ENCODE measurements at regions of chr2 and their contacts with region 1.

Region 1: GRCh38 chr2:130342533-130343275 is at the start of gene IMP4:
- DNase-seq: peak; percentile 96
- ATAC-seq: peak; percentile 92
- H3K4me3 Mint-ChIP-seq: peak within 1 kb of the TSS; percentile 98
- H3K27ac Mint-ChIP-seq: peak within 1 kb of the TSS; percentile 100
- H3K4me1 Mint-ChIP-seq: peaks cover 28% of the 10 kb centered on the region
- H3K27me3 Mint-ChIP-seq: no peaks in the 10 kb centered on the region
- total RNA-seq, gene IMP4: 148 to 169 TPM

Region 2: DNA sequence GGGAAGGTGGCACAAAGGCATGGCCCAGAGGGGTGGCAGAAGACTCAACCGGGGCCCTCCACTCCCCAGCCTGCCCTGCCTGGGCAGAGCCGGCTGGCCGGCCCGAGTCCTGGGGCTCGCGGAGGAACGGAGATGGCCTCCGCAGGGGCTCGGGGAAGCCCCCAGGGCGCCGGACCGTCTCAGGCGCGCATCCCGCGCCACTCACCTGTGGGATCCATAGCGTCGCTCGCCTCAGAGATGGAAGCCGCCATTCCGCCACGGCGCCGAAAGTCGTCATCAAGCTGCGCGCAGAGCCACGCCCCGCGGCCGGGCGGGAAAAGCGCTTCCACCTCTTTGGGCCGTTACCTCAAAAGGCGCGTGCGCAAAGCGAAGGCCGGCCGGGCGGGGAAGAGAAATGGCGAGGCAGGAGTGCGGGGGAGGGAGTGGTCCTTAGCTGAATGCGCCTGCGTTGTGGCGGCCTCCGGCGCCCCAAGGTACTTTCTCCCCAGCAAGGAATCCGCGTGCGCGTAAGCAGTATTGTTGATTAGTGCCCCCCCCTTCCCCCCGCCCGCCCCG is 161.3 kb before region 1 on chr2 and contains the start of gene SMPD4:
- CTCF ChIA-PET with region 1: interaction called, 13 read pairs
- POLR2A ChIA-PET with region 1: interaction called, 7 read pairs
- intact Hi-C with region 1: loop called in 1 of 2 experiments (anchors 1 kb)
- DNase-seq: peak; percentile 98
- ATAC-seq: peak; percentile 74
- H3K4me3 Mint-ChIP-seq: peak within 1 kb of the TSS; percentile 95
- H3K27ac Mint-ChIP-seq: peak within 1 kb of the TSS; percentile 90
- H3K4me1 Mint-ChIP-seq: peaks cover 22% of the 10 kb centered on the region
- H3K27me3 Mint-ChIP-seq: no peaks in the 10 kb centered on the region
- total RNA-seq, gene SMPD4: 73.8 to 78.6 TPM

Region 3: DNA sequence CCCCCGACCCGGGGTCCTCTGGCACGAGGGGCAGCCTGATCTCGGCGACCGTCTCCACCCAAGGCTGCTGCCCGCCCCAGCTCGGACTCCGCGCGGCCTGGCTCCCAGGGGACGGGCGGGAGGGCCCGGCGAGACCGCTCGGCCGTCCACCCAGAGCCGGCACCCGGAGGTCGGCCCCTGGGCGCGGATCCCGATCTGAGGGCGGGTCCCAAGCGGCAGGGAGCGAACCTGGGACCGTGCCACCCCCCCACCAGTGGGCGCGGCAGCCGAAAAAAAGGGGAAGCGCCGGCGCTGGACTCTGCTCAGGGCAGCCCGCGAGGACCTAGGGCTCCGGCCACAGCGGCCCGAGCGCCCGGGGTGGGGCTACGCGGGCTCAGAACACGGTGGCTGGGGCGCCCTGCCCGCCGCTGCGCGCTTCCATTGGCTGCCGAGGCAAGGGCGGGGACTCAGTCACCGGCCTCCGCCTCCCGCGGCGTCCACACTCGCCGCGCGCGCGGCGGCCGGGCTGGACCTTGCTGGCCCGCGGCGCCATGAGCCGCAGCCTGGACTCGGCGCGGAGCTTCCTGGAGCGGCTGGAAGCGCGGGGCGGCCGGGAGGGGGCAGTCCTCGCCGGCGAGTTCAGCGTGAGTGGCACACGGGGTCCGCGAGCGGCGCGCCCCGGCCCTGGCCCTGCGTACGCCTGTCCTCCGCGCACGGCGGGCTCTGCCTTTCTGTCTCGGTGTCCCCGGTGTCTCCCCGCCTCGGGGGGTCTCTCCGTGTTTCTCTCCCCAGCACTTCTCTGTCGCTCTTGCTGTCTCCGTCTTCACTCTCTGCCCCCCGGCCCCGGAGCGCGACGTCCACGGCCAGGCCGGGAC is 13.1 kb after region 1 on chr2 and contains the start of gene PTPN18:
- CTCF ChIA-PET with region 1: interaction called, 5 read pairs
- POLR2A ChIA-PET with region 1: interaction called, 4 read pairs
- intact Hi-C with region 1: loop called (anchors 1 kb)
- DNase-seq: peak; percentile 76
- ATAC-seq: peak; percentile 96
- H3K4me3 Mint-ChIP-seq: peak within 1 kb of the TSS; percentile 67
- H3K27ac Mint-ChIP-seq: peak within 1 kb of the TSS; percentile 43
- H3K4me1 Mint-ChIP-seq: peaks cover 8% of the 10 kb centered on the region
- H3K27me3 Mint-ChIP-seq: no peaks in the 10 kb centered on the region
- total RNA-seq, gene PTPN18: 41.6 to 49.3 TPM

Region 4: GRCh38 chr2:130391058-130391871 is 48.6 kb after region 1 on chr2:
- CTCF ChIA-PET with region 1: interaction called, 3 read pairs
- POLR2A ChIA-PET with region 1: no interaction called
- intact Hi-C with region 1: loop called in 1 of 2 experiments (anchors 1 kb)
- DNase-seq: peak; percentile 91
- ATAC-seq: peak; percentile 99
- H3K4me3 Mint-ChIP-seq: peak overlapping the region; percentile 72
- H3K27ac Mint-ChIP-seq: peak overlapping the region; percentile 87
- H3K4me1 Mint-ChIP-seq: peaks cover 10% of the 10 kb centered on the region
- H3K27me3 Mint-ChIP-seq: peaks cover 6% of the 10 kb centered on the region

Region 5: DNA sequence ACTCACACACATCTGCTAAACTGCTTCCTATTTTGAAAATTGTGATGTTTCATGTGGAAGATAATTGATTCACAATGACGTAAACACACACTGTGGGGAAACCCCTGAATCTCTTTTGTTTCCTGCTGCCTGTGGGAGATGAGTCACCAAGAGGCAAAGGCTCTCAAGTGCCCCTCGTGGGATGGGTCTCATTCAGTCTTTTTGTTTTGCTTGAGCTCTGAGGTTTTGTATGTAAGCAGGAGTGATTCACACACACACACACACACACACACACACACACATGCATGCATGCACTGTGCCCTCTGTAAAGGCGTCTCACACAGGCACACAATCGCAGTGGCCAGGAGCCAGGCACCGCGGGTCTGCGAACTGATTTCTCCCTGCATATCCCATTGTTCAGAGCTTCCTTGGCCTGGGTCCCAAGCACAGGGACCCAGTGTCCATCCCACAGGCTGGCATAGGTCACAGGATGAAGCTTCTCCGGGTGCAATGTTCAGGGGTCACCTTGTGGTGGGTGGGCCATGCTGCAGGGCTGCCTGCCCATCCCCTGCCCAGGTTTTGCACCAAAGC is 481.9 kb after region 1 on chr2:
- CTCF ChIA-PET with region 1: no interaction called
- POLR2A ChIA-PET with region 1: no interaction called
- intact Hi-C with region 1: loop called in 1 of 2 experiments (anchors 10 kb)
- DNase-seq: peak; percentile 80
- ATAC-seq: peak; percentile 95
- H3K4me3 Mint-ChIP-seq: peak overlapping the region; percentile 35
- H3K27ac Mint-ChIP-seq: peak overlapping the region; percentile 89
- H3K4me1 Mint-ChIP-seq: peaks cover 20% of the 10 kb centered on the region
- H3K27me3 Mint-ChIP-seq: no peaks in the 10 kb centered on the region

Measured in activated CD4-positive, alpha-beta T cell treated with anti-CD3 and anti-CD28 coated beads for 36 hours (primary cell).